ENCODE measurements at regions of chr1 and their contacts with region 1.

Region 1: DNA sequence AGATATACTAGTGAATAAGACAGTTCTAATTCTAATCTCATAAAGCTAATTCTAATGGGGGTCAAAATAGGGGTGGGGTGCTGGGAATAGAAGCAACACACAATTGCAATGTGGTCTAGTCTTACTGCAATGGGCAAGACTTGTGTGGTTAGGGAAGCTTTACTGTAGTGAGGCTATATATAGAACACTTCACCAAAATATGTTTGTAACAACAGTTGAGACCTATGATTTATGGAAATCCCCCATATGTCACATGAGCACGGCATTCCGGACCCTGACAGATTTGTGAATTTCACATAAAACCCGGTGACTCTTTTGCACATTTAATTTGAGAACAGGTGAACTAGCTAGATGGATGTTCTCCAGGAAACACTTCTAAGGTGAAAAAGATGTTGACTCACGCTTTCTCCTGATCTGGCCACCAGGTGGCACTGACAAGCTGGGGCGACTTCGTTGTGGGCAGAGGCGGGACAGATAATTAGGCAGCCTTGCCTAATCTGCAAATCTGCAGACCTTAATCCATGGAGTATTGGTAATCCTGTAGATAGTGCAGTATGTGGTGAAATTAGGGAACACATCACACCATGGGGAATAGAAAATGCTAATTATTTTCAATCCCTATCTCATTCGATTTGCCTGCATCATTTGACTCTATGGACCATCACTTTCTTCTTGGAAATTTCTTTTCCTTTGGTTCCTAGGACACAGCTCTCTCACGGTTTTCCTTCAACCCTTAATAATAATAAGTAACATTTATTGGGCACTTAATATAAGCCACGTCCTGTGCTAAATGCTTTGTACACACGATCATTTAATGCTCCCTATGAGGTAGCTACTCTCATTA is 37.7 kb downstream of the KIAA0040 start:
- DNase-seq: peak; percentile 91
- H3K4me3 ChIP-seq: no peak overlapping the region
- H3K27ac ChIP-seq: peak overlapping the region in 2 of 8 donors; percentile 22 to 42
- H3K4me1 ChIP-seq: peaks cover 0 to 29% (median 16%) of the 10 kb centered on the region in 6 donors
- H3K27me3 ChIP-seq: peaks cover 0 to 32% (median 0%) of the 10 kb centered on the region in 7 donors
- CTCF ChIP-seq: peak; percentile 72 to 89 (median 84)
- POLR2A ChIP-seq: no peak

Region 2: GRCh38 chr1:175319418-175320230 is 164.8 kb after region 1 on chr1:
- intact Hi-C with region 1: loop called (anchors 2 kb)
- DNase-seq: peak; percentile 89
- H3K4me3 ChIP-seq: peak overlapping the region in 1 of 8 donors; percentile 38
- H3K27ac ChIP-seq: peak overlapping the region in 4 of 8 donors; percentile 4 to 74 (median 64)
- H3K4me1 ChIP-seq: peaks cover 0 to 28% (median 13%) of the 10 kb centered on the region in 6 donors
- H3K27me3 ChIP-seq: no peaks in the 10 kb centered on the region
- CTCF ChIP-seq: peak; percentile 84 to 97 (median 94)
- POLR2A ChIP-seq: no peak

Region 3: DNA sequence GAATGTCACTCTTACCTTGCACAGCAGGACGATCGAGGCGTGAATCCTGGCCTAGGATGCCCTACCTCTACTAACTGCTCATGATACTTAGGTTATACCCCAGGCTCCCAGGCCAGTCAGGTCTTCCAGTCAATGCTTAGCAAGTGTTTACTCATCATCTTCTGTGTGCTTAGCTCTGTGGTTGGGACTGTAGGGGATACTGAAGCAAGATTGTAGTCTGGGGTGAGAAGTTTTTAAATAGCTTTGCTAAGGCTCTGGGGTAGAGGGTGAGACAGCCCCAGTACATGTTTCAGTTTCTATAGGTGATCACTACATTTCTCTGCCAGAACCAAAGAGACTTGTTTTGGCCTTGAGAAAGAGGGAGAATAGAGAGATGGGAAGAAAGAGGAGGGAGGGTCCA is 288.5 kb after region 1 on chr1:
- intact Hi-C with region 1: no loop called
- DNase-seq: no peak
- H3K4me3 ChIP-seq: no peak overlapping the region
- H3K27ac ChIP-seq: no peak overlapping the region
- H3K4me1 ChIP-seq: no peaks in the 10 kb centered on the region
- H3K27me3 ChIP-seq: no peaks in the 10 kb centered on the region
- CTCF ChIP-seq: no peak
- POLR2A ChIP-seq: no peak

Measured in spleen (tissue), 13 donors.